ENCODE measurements at regions of chr18 and their contacts with region 1.

Region 1: DNA sequence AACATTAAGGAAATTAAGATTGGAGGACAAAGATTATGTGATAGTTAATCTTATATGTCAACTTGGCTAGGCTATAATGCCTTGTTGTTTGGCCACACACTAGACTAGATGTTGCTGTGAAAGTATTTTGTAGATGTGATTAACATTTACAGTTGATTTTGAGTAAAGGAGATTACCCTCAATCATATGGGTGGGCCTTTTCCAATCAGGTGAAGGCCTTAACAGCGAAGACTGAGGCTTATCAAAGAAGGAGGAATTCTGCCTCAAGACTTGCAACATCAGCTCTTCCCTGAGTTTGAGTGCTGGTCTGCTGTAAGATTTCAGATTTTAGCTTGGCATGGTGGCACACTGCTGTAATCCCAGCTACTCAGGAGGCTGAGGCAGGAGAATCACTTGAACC is 250.3 kb downstream of the CDH20 start:
- DNase-seq: no peak
- ATAC-seq: no peak
- H3K4me3 ChIP-seq: no peak overlapping the region
- H3K4me3 Mint-ChIP-seq: no peak overlapping the region
- H3K27ac ChIP-seq: no peak overlapping the region
- H3K27ac Mint-ChIP-seq: no peak overlapping the region
- H3K4me1 ChIP-seq: peaks cover 0 to 8% of the 10 kb centered on the region in 2 experiments
- H3K4me1 Mint-ChIP-seq: peaks cover 8 to 9% (median 8%) of the 10 kb centered on the region in 3 donors
- H3K27me3 ChIP-seq: peaks cover 3 to 20% of the 10 kb centered on the region in 2 experiments
- H3K27me3 Mint-ChIP-seq: peaks cover 32 to 36% of the 10 kb centered on the region in 2 donors

Region 2: GRCh38 chr18:61340148-61340547 is 243.4 kb before region 1 on chr18:
- CTCF ChIA-PET with region 1: interaction called in 1 of 2 experiments, 16 read pairs
- POLR2A ChIA-PET with region 1: no interaction called
- DNase-seq: no peak
- ATAC-seq: no peak
- H3K4me3 ChIP-seq: no peak overlapping the region
- H3K4me3 Mint-ChIP-seq: no peak overlapping the region
- H3K27ac ChIP-seq: no peak overlapping the region
- H3K27ac Mint-ChIP-seq: no peak overlapping the region
- H3K4me1 ChIP-seq: no peaks in the 10 kb centered on the region
- H3K4me1 Mint-ChIP-seq: no peaks in the 10 kb centered on the region
- H3K27me3 ChIP-seq: peaks cover 0 to 9% of the 10 kb centered on the region in 2 experiments
- H3K27me3 Mint-ChIP-seq: peaks cover 9 to 19% of the 10 kb centered on the region in 2 donors

Measured in T-cell (primary cell).